ENCODE measurements at regions of chr4 and their contacts with region 1.

Region 1: DNA sequence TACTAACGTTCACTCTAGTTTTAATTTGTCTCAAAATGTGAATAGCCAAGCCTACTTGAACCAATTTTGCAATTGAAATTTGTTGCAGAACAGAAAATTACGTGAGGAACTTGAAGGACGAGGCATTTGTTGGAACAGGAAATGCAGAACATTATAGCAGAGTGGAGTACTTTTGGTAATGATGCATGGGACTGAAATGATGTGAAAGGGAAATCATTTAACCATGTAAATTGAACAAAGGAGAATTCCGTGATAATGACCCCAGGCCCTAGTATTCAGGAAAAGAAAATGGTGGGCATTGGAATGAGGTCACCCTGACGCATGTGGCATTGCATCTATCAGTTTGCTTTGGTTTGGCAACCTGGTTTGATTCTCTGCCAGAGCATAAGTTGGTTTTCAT is 44.9 kb upstream of the BEND4 start:
- DNase-seq: no peak
- H3K4me3 ChIP-seq: no peak overlapping the region
- H3K27ac ChIP-seq: no peak overlapping the region
- H3K4me1 ChIP-seq: no peaks in the 10 kb centered on the region
- H3K27me3 ChIP-seq: no peaks in the 10 kb centered on the region
- CTCF ChIP-seq: no peak

Region 2: GRCh38 chr4:42048407-42048806 is 148.9 kb before region 1 on chr4:
- CTCF ChIA-PET with region 1: no interaction called
- dilution Hi-C with region 1: no loop called
- in situ Hi-C with region 1: no loop called
- intact Hi-C with region 1: no loop called
- DNase-seq: peak; percentile 71
- H3K4me3 ChIP-seq: no peak overlapping the region
- H3K27ac ChIP-seq: no peak overlapping the region
- H3K4me1 ChIP-seq: no peaks in the 10 kb centered on the region
- H3K27me3 ChIP-seq: no peaks in the 10 kb centered on the region
- CTCF ChIP-seq: no peak

Region 3: GRCh38 chr4:42078184-42078801 is 119.0 kb before region 1 on chr4:
- CTCF ChIA-PET with region 1: interaction called, 16 read pairs
- dilution Hi-C with region 1: no loop called
- in situ Hi-C with region 1: no loop called
- intact Hi-C with region 1: no loop called
- DNase-seq: no peak
- H3K4me3 ChIP-seq: no peak overlapping the region
- H3K27ac ChIP-seq: no peak overlapping the region
- H3K4me1 ChIP-seq: no peaks in the 10 kb centered on the region
- H3K27me3 ChIP-seq: no peaks in the 10 kb centered on the region
- CTCF ChIP-seq: no peak

Measured in mammary epithelial cell (primary cell).